Activated CD8-positive, alpha-beta T cell treated with anti-CD3 and anti-CD28 coated beads for 36 hours (primary cell): ENCODE measurements at regions of chr2 and their contacts with region 1.

Region 1: GRCh38 chr2:174546581-174547506 is 50.8 kb downstream of the WIPF1 start:
- DNase-seq: peak; percentile 69
- ATAC-seq: peak; percentile 81
- H3K4me3 Mint-ChIP-seq: no peak overlapping the region
- H3K27ac Mint-ChIP-seq: no peak overlapping the region
- H3K4me1 Mint-ChIP-seq: peaks cover 21% of the 10 kb centered on the region
- H3K27me3 Mint-ChIP-seq: no peaks in the 10 kb centered on the region
- CTCF ChIP-seq: peak; percentile 50

Region 2: GRCh38 chr2:174473796-174474195 is 73.0 kb before region 1 on chr2:
- CTCF ChIA-PET with region 1: interaction called, 28 read pairs
- POLR2A ChIA-PET with region 1: interaction called, 3 read pairs
- intact Hi-C with region 1: no loop called
- DNase-seq: no peak
- ATAC-seq: no peak
- H3K4me3 Mint-ChIP-seq: no peak overlapping the region
- H3K27ac Mint-ChIP-seq: no peak overlapping the region
- H3K4me1 Mint-ChIP-seq: peaks cover 8% of the 10 kb centered on the region
- H3K27me3 Mint-ChIP-seq: no peaks in the 10 kb centered on the region
- CTCF ChIP-seq: no peak

Region 3: DNA sequence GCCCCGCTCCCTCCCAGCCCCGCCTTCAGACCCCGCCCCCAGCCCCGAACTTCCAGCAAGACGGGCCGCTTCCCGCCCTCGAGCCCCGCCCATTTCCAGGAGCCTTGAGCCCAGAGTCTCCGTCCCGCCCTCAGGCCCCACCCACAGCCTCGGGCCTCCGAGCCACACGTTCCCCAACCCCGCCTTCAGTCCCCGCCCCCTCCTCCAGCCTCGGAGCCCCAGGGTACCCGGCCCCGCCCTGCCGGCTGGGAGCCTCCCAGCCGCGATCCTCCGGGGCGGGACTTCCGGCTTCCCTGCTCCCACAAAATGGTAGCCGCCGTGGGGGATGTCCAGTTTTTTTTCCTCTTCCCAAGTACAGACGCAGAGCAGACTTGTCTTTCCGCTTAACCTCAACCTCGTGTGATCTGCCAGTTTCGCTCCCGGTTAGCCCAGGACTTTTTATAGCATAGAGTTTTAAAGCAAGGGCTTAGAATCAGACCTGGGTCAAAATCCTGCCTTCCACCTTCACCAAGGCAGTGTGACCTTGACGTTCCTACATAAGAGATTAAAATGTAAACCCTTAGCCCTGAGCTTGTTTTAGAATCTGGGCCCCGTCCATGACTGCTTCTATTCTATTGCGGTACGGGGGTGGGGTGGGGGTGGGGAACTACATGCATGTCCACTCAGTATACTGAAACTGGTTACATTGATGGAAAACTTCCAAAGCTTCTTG is 59.6 kb before region 1 on chr2:
- CTCF ChIA-PET with region 1: interaction called, 21 read pairs
- POLR2A ChIA-PET with region 1: interaction called, 4 read pairs
- intact Hi-C with region 1: no loop called
- DNase-seq: peak; percentile 100
- ATAC-seq: peak; percentile 93
- H3K4me3 Mint-ChIP-seq: peak overlapping the region; percentile 95
- H3K27ac Mint-ChIP-seq: peak overlapping the region; percentile 92
- H3K4me1 Mint-ChIP-seq: peaks cover 51% of the 10 kb centered on the region
- H3K27me3 Mint-ChIP-seq: no peaks in the 10 kb centered on the region
- CTCF ChIP-seq: no peak

Region 4: DNA sequence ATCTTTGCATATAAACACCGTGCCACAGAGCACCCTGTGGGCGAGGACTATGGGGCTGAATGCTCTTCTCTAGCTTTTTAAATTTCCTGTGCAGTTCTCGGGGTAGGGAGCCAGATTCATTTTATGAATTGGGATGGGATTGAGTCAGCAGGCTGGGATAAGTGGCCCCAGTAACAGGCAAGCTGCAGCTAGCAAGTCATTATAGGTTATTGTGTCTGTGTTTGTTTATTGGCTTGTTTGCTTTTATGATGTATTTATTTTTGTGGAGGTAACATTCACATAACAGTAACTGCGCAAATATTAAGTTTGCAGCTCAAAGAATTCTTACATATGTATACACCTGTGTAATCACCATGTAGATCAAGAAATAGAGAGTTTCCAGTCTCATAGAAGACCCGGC is 11.0 kb before region 1 on chr2:
- CTCF ChIA-PET with region 1: interaction called, 10 read pairs
- POLR2A ChIA-PET with region 1: no interaction called
- intact Hi-C with region 1: no loop called
- DNase-seq: no peak
- ATAC-seq: no peak
- H3K4me3 Mint-ChIP-seq: no peak overlapping the region
- H3K27ac Mint-ChIP-seq: no peak overlapping the region
- H3K4me1 Mint-ChIP-seq: no peaks in the 10 kb centered on the region
- H3K27me3 Mint-ChIP-seq: no peaks in the 10 kb centered on the region
- CTCF ChIP-seq: no peak

Region 5: DNA sequence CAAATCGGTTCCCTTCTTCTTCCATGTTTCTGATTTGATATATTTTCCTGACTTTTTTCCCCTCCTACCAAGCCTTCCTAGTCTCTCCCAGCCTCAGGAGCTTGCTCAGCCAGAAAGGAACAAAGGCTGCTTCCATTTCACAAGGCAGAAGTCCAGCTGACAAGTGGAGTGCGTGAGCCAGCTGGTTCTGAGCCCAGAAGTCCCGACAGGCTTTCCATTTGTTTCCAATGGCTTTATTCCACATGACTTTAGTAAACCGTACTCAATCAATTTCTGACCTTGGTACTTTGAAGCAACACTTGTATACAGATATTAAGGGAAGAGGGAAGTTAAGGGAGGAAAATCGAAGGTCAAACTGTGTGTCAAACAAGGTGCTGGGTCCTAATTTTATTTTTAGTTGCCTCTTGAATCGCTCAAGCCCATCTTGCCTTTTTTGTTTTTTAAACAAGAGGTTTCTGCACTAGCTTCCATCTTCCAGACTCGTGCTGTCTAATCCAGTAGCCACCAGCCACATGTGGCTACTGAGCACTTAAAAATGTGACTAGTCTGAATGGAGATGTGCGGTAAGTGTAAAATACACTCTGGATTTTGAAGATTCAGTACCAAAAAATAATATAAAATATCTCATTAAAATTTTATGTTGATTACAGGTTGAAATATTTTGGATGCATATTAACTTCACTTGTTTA is 14.6 kb after region 1 on chr2:
- CTCF ChIA-PET with region 1: interaction called, 14 read pairs
- POLR2A ChIA-PET with region 1: no interaction called
- intact Hi-C with region 1: no loop called
- DNase-seq: no peak
- ATAC-seq: no peak
- H3K4me3 Mint-ChIP-seq: no peak overlapping the region
- H3K27ac Mint-ChIP-seq: peak overlapping the region; percentile 47
- H3K4me1 Mint-ChIP-seq: peaks cover 18% of the 10 kb centered on the region
- H3K27me3 Mint-ChIP-seq: no peaks in the 10 kb centered on the region
- CTCF ChIP-seq: no peak

Region 6: GRCh38 chr2:174568425-174568824 is 21.6 kb after region 1 on chr2:
- CTCF ChIA-PET with region 1: interaction called, 11 read pairs
- POLR2A ChIA-PET with region 1: no interaction called
- intact Hi-C with region 1: no loop called
- DNase-seq: no peak
- ATAC-seq: peak; percentile 47
- H3K4me3 Mint-ChIP-seq: no peak overlapping the region
- H3K27ac Mint-ChIP-seq: no peak overlapping the region
- H3K4me1 Mint-ChIP-seq: peaks cover 52% of the 10 kb centered on the region
- H3K27me3 Mint-ChIP-seq: no peaks in the 10 kb centered on the region
- CTCF ChIP-seq: no peak